Lower leg skin (tissue), 4 donors: ENCODE measurements at regions of chrX and their contacts with region 1.

Region 1: DNA sequence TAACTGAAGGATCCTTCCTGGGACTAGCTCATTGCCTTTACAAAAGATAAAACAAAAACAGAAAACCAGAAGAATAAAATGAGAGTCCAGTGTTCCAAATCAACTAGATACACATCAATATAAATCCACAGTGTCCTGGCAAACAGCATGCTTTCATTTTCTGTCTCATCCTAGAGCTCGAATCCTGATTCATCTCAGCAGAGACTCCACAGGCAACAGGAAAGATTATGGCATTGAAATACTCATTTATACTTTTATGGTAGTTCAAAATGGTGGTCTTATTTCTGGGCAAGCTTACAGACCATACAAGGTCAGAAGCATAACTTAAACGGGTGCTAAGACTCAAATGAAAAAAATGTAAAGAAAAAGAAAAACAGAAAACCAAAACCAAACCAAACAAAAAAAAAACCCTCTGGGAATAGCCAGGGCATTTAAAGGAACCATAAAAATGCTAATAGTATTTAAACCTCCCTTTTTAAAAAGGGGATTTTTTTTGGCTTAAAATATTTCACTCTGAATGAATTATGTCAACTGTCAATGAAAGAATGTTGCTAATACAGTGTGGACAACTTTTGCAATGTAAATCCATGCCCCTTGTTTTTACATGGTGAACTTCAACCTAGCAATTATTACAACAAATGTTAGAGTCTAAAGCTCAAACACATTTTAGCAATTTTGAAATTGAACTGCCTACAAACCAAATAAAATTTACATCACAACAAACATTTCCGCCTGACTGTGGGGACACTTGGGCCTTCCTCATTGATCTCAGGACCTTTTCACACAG is 57.9 kb downstream of the GPR101 start:
- DNase-seq: no peak
- H3K4me3 ChIP-seq: no peak overlapping the region
- CTCF ChIP-seq: no peak
- POLR2A ChIP-seq: no peak

Region 2: DNA sequence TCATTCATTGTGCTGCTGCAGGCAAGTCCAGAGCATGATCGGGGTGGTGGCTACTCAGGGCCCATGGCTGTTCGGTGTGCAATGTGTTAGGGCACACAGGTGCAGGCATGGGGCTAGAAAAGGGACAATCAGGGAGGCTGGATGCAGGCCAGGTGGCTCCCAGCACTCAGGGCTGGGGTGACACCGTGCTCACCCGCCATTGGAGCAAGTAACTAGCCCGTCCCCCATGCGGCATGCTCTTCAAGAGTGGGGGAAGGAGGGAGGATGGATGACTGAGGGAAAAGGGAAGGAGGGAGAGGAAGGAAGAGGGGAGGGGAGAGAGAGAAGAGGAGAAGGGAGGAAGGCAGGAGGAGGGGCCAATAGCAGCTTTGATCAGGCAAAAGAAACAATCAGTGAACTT is 1390.7 kb before region 1 on chrX:
- intact Hi-C with region 1: loop called (anchors 5 kb)
- DNase-seq: no peak
- H3K4me3 ChIP-seq: no peak overlapping the region
- CTCF ChIP-seq: no peak
- POLR2A ChIP-seq: no peak

Region 3: DNA sequence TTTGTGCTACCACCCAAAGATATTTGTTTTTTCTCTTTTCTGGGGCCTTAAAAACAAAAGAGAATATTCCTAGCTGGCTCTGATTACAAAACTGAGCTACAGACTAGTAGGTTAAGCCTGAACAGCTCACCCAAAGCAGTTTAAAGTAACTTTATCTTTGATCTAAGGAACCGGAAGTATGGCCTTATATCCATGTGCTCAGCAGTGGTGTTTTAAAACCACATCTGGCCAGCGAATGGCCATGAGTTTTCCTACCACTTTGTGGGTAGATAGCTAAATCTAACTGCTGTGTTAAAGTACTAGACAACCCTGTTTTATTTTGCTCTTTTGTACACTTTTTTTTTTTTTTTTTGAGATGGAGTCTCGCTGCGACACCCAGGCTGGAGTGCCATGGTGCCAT is 650.5 kb before region 1 on chrX:
- intact Hi-C with region 1: no loop called
- DNase-seq: no peak
- H3K4me3 ChIP-seq: no peak overlapping the region
- CTCF ChIP-seq: no peak
- POLR2A ChIP-seq: no peak